Activated naive CD4-positive, alpha-beta T cell treated with anti-CD3 and anti-CD28 coated beads for 36 hours (primary cell): ENCODE measurements at regions of chr14 and their contacts with region 1.

Region 1: GRCh38 chr14:100239840-100240724 is 1.1 kb downstream of the YY1 start:
- DNase-seq: peak; percentile 88
- H3K4me3 Mint-ChIP-seq: peak overlapping the region; percentile 86
- H3K27ac Mint-ChIP-seq: peak overlapping the region; percentile 88
- H3K4me1 Mint-ChIP-seq: peaks cover 52% of the 10 kb centered on the region
- H3K27me3 Mint-ChIP-seq: no peaks in the 10 kb centered on the region

Region 2: DNA sequence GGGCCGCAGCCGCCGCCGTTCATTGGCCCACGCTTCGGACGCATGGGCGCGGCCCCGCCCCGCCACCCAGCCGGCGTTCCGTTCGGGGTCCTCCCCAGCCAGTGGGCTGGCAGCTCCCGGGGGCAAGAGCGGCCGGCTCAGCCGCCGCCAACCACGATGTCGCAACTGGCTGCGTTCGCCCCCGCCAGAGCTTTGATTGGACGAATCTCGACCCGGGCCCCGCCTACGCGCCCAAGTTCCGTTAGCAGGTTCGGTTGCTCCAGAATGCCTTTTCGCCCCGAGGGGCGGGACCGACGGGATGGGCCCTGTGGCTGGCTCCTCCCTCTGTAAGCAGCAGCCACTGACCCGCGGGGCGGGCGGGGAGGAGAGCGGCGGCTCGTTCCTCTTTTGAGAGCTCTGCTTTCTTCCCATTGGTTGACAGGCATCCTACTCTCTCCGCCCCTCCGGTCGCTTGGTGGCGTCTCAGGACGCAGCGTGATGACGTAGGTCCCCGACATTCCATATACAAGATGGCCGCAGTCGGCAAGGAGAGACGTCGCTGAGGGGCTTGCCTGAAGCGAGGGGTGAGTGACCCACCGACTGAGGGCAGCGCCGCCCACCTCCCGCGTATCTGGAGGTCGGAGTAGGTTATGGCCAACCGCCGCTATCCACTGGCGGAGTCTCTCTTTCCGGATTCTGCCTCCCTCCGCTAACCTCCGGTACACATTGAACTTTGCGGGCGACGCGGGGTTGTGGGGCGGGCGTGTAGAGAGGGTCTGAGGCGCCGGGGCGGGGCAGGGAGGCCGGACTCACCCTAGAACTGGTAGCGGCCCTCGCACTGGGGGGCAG is 759.0 kb before region 1 on chr14 and contains the start of gene CCNK:
- CTCF ChIA-PET with region 1: no interaction called
- intact Hi-C with region 1: loop called (anchors 1 kb)
- DNase-seq: peak; percentile 100
- H3K4me3 Mint-ChIP-seq: peak within 1 kb of the TSS; percentile 90
- H3K27ac Mint-ChIP-seq: peak within 1 kb of the TSS; percentile 91
- H3K4me1 Mint-ChIP-seq: peaks cover 53% of the 10 kb centered on the region
- H3K27me3 Mint-ChIP-seq: no peaks in the 10 kb centered on the region
- total RNA-seq, gene CCNK: 90.7 to 99.0 TPM

Region 3: DNA sequence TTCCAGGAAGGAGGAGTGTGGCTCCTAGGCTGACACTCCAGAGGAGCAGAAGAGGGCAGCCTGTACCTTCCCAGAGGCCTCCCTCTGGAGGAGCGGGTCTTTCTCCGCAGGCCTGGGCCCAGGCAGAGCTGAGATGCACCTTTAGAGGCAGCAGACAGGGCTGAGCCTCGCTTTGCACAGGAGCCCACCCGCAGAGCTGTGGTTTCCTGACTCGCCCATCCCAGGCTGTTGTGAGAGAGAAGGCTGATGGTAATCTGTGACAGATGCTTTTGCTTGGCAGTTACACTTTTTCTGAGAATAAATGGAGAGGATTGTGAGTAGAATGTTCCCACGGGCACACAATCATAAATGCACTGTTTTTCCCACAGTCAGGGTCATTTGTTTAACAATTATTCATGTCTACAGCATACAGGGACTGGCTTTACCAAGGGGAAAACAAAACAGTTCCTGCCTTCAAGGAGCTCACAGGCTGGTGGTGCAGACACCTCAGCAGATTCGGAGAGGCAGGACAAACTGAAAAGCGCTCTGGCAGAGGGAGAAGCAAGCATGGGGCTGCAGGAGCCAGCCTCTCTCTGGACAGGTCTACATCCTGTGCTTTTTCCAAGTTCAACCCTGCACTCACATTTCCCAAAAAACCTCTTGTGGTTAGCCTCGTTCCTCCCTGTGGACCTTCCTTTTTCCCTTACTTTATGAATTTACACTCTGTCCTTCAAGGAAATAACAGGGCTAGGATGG is 160.9 kb before region 1 on chr14:
- CTCF ChIA-PET with region 1: interaction called, 3 read pairs
- intact Hi-C with region 1: loop called (anchors 5 kb)
- DNase-seq: peak; percentile 78
- H3K4me3 Mint-ChIP-seq: peak overlapping the region; percentile 74
- H3K27ac Mint-ChIP-seq: peak overlapping the region; percentile 96
- H3K4me1 Mint-ChIP-seq: peaks cover 94% of the 10 kb centered on the region
- H3K27me3 Mint-ChIP-seq: no peaks in the 10 kb centered on the region

Region 4: DNA sequence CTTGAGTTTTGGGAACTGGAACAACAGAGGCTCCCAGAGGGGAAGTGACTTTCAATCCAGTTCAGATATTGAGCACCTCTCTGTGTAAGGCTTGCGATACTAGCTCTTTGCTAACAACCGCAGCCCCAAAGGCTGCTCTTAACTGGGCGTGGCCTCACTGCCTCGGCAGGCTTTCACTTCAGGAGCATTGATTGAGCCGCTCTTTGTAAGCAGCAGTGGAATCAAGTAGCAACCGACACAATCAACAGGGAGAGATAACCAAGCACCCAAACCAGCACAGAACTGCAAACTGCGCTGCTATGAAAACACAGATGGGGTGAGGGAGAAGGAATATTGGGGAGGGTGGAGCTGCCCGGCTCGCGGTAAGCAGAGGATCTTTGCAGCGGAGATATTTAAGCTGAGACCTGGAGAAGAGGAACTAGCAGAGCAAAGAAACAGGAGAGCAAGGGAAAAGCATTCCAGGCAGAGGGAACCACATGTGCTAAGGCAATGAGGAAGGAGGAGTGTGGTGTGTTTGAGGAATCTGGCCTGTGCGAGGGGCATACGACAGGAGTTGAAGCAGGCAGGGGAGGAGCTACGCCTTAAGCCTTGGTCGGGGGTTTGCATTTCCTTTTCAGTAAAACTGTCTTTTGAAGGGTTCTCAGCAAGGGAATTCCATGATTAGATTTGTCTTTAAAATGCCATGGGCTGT is 18.4 kb before region 1 on chr14:
- CTCF ChIA-PET with region 1: interaction called, 37 read pairs
- intact Hi-C with region 1: loop called (anchors 1 kb)
- DNase-seq: peak; percentile 81
- H3K4me3 Mint-ChIP-seq: no peak overlapping the region
- H3K27ac Mint-ChIP-seq: no peak overlapping the region
- H3K4me1 Mint-ChIP-seq: peaks cover 8% of the 10 kb centered on the region
- H3K27me3 Mint-ChIP-seq: no peaks in the 10 kb centered on the region

Region 5: DNA sequence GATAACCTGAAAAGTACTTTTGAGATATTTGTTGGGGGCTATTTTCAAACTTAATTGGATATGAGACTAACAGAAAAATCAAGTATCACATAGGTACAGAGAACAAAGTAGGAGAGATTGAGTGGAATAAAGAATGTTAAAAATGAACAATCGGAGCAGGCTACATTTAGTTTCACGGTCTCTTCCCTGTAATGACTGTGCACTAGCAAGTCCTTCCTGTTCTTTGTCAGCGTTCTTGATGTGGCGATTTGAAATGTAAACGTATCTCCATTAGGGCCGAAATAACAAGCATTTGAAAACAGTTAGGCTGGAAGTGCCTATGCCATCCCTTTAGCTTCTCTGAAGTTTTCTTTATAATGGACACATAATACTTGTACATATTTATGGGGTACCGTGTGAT is 35.1 kb after region 1 on chr14:
- CTCF ChIA-PET with region 1: no interaction called
- intact Hi-C with region 1: no loop called
- DNase-seq: no peak
- H3K4me3 Mint-ChIP-seq: no peak overlapping the region
- H3K27ac Mint-ChIP-seq: peak overlapping the region; percentile 21
- H3K4me1 Mint-ChIP-seq: peaks cover 43% of the 10 kb centered on the region
- H3K27me3 Mint-ChIP-seq: no peaks in the 10 kb centered on the region

Region 6: DNA sequence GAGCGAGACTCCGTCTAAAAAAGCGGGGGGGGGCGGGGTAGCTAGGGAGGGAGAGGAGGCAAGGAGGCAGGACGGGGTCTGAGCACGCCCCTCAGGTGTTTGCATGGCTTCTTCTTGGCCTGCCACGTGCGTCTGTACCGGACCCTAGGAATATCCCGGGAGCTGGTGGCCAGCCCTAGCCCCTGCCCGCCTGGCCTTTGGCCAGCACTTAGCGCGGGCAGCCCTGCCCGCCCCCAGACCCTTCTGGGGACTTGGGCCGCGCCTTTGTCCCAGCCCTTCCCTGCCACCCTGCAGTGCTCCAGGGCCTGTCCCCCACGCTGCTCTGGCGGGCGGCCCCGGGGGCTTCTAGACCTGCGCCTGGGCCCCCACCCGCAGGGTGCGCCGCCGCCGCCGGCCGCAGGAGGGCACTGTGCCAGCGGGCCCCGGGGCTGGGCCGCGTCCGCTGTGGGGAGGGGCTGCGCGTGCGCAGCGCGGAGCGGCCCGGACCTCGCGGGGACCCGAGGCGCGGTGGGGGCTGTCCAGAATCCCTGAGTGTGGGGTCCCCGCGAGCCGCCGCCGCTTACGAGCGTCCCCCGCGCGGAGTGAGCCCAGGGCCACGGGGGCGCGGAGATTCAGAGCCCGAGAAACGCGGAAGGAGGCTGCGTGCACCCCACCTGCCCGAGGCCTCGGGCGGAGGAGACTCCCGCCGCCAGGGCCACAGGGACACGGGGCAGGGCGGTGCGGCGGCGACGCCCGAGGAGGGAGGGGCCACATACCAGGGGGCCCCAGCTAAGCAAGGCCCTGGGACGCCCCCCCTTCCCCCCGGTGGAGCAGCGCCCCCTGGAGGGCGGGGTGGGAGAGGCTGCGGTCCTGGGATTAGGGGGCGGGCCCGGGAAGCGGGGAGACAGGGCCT is 45.2 kb after region 1 on chr14:
- CTCF ChIA-PET with region 1: interaction called, 26 read pairs
- intact Hi-C with region 1: loop called (anchors 2 kb)
- DNase-seq: peak; percentile 75
- H3K4me3 Mint-ChIP-seq: peak overlapping the region; percentile 69
- H3K27ac Mint-ChIP-seq: no peak overlapping the region
- H3K4me1 Mint-ChIP-seq: peaks cover 8% of the 10 kb centered on the region
- H3K27me3 Mint-ChIP-seq: no peaks in the 10 kb centered on the region